ENCODE measurements at regions of chr19 and their contacts with region 1.

Region 1: DNA sequence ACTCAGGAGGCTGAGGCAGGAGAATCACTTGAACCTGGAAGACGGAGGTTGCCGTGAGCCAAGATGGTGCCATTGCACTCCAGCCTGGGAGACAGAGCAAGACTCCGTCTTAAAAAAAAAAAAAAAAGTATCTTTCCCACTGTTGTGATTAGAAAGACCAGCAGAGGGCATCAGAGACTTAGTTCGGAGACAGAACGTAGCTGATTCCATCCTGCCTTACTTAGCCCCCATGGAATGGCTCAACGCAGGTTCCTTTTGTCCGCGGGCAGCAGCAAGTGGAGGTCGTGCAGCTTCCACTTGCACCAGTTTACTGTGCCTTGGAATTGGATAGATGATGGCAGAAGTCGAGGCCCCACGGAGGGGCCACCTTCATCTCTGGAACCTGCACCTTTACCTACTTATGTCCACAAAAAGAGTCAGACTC is 8.1 kb downstream of the TIMM29 start:
- H3K4me3 ChIP-seq: no peak overlapping the region
- H3K27ac ChIP-seq: no peak overlapping the region
- H3K4me1 ChIP-seq: no peaks in the 10 kb centered on the region; the same call in 1 of the 2 replicates
- CTCF ChIP-seq: peak; percentile 94

Region 2: GRCh38 chr19:10870955-10871603 is 65.6 kb before region 1 on chr19 and contains the start of gene CARM1:
- CTCF ChIA-PET with region 1: interaction called, 13 read pairs
- POLR2A ChIA-PET with region 1: no interaction called
- H3K4me3 ChIP-seq: peak within 1 kb of the TSS; percentile 88
- H3K27ac ChIP-seq: peak within 1 kb of the TSS; percentile 94
- H3K4me1 ChIP-seq: no peaks in the 10 kb centered on the region
- CTCF ChIP-seq: no peak

Region 3: GRCh38 chr19:10952809-10953208 is 16.1 kb after region 1 on chr19:
- CTCF ChIA-PET with region 1: interaction called, 14 read pairs
- POLR2A ChIA-PET with region 1: no interaction called
- H3K4me3 ChIP-seq: no peak overlapping the region
- H3K27ac ChIP-seq: no peak overlapping the region
- H3K4me1 ChIP-seq: no peaks in the 10 kb centered on the region
- CTCF ChIP-seq: no peak

Region 4: GRCh38 chr19:10979951-10980381 is 43.3 kb after region 1 on chr19:
- CTCF ChIA-PET with region 1: interaction called, 10 read pairs
- POLR2A ChIA-PET with region 1: no interaction called
- H3K4me3 ChIP-seq: no peak overlapping the region
- H3K27ac ChIP-seq: no peak overlapping the region
- H3K4me1 ChIP-seq: peaks cover 15% of the 10 kb centered on the region
- CTCF ChIP-seq: no peak

Region 5: DNA sequence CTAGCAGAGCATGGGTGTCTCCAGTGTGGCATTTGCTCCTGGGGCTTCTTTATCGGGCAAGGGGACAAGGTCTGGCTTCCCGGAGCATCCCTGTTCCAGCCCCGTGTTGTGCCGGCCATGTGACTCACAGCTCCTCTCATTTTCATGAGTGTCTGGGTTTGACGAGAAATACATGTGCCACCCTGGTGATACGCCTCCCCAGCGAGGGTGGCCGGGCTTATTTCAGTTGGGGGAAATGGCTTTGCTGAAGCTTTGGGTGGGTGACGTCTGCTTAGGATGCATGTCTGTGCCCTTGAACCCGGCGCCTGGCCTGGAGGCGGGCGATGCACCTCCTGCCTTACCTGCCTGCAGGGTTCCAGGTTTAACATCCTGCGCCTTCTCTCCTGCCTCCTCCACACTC is 90.7 kb after region 1 on chr19:
- CTCF ChIA-PET with region 1: interaction called, 13 read pairs
- POLR2A ChIA-PET with region 1: no interaction called
- H3K4me3 ChIP-seq: no peak overlapping the region
- H3K27ac ChIP-seq: no peak overlapping the region
- H3K4me1 ChIP-seq: no peaks in the 10 kb centered on the region
- CTCF ChIP-seq: no peak